Spleen (tissue), 13 donors: ENCODE measurements at regions of chr16 and their contacts with region 1.

Region 1: DNA sequence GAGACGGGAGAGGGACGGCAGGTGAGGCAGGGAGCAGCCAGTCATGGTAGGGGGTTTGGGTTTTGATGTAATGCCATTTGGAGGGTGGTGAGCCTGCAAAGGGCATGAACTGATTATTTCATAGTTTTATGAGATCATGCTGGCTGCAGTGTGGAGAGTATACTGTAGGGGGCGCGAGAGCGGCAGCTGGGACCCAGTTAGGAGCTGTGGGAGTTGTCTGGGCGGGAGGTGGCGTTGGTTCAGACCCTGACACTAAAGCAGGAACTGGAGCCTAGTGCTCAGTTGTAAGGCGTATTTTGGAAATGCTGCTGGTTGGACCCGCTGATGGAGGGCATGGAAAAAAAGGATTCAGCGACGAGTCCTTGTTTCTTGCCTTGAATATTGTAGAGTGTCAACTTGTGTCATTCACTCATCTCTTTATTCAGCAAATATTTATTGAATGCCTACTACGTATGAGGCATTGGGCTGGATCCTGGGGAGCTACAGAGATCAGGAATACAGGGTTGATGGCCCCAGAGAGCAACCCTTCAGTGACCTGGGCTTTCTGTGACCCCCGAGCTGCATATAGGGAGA is 23.7 kb upstream of the KDM8 start:
- DNase-seq: peak; percentile 94
- H3K4me3 ChIP-seq: no peak overlapping the region
- H3K27ac ChIP-seq: peak overlapping the region in 1 of 8 donors; percentile 22
- H3K4me1 ChIP-seq: peaks cover 9 to 22% (median 12%) of the 10 kb centered on the region in 6 donors
- H3K27me3 ChIP-seq: no peaks in the 10 kb centered on the region
- CTCF ChIP-seq: peak; percentile 89 to 99 (median 95)
- POLR2A ChIP-seq: no peak

Region 2: DNA sequence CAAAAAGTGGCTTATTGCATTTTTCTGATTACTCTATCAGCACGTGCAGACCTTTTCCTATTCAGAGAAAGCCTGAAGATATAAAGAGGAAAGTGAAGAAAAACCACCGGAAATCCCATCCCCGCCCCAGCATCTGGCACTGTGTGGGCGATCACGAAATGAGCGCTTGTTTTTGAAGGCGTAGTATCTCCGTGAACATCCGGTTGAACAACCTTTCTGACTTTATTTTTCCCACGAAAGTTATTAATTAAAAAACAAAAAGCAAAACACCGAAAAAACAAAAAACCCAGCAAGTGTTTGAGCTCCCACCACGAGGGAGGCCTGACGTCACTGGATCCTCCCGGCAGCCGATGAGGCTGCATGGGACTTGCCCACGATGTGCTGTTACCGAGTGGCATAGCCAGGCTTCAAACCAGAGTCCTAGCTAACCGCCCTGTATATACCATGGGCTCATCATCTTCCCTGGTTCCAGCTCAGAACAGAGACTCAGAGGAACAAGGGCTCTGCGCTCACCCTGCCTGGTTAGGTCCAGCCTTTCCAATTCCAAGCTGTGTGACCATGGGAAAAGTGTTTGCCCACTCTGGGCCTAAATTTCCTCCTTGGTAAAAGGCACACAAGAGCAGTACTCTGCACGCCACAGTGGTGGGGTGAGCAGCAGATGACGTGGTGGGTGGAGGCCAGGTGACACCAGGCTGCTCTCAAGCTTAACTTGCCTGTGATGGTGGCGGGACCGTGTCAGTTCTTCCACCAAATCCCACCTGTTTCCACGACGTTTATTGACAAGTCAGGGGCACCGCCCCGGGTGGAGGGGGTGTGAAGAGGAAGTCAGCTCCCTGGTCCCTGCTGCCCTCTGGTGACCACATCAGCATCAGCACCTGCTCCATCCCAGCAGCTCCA is 188.1 kb after region 1 on chr16:
- intact Hi-C with region 1: loop called (anchors 5 kb)
- DNase-seq: peak; percentile 96
- H3K4me3 ChIP-seq: peak overlapping the region in 6 of 8 donors; percentile 9 to 50 (median 20)
- H3K27ac ChIP-seq: peak overlapping the region; percentile 81 to 92 (median 88)
- H3K4me1 ChIP-seq: peaks cover 27 to 71% (median 31%) of the 10 kb centered on the region in 6 donors
- H3K27me3 ChIP-seq: no peaks in the 10 kb centered on the region
- CTCF ChIP-seq: peak; percentile 57 to 91 (median 85)
- POLR2A ChIP-seq: no peak